ENCODE measurements at regions of chr14 and their contacts with region 1.

Region 1: GRCh38 chr14:73209953-73210352 is 27.4 kb upstream of the PAPLN start:
- DNase-seq: peak; percentile 83
- H3K4me3 ChIP-seq: no peak overlapping the region
- H3K27ac ChIP-seq: peak overlapping the region; percentile 80
- H3K4me1 ChIP-seq: peaks cover 25% of the 10 kb centered on the region
- H3K27me3 ChIP-seq: no peaks in the 10 kb centered on the region
- CTCF ChIP-seq: no peak
- POLR2A ChIP-seq: no peak

Region 2: GRCh38 chr14:73125169-73125588 is 84.8 kb before region 1 on chr14:
- CTCF ChIA-PET with region 1: no interaction called
- POLR2A ChIA-PET with region 1: no interaction called
- dilution Hi-C with region 1: no loop called
- intact Hi-C with region 1: no loop called
- DNase-seq: no peak
- H3K4me3 ChIP-seq: no peak overlapping the region
- H3K27ac ChIP-seq: no peak overlapping the region
- H3K4me1 ChIP-seq: no peaks in the 10 kb centered on the region
- H3K27me3 ChIP-seq: no peaks in the 10 kb centered on the region
- CTCF ChIP-seq: no peak
- POLR2A ChIP-seq: no peak

Region 3: GRCh38 chr14:73227812-73228781 is 18.1 kb after region 1 on chr14:
- CTCF ChIA-PET with region 1: interaction called, 8 read pairs
- POLR2A ChIA-PET with region 1: interaction called, 5 read pairs
- dilution Hi-C with region 1: no loop called
- intact Hi-C with region 1: loop called (anchors 2 kb)
- DNase-seq: peak; percentile 96
- H3K4me3 ChIP-seq: peak overlapping the region in 1 of 3 experiments; percentile 11
- H3K27ac ChIP-seq: peak overlapping the region; percentile 78
- H3K4me1 ChIP-seq: peaks cover 36% of the 10 kb centered on the region
- H3K27me3 ChIP-seq: no peaks in the 10 kb centered on the region
- CTCF ChIP-seq: no peak
- POLR2A ChIP-seq: no peak

Region 4: GRCh38 chr14:73283608-73284379 is 73.8 kb after region 1 on chr14:
- CTCF ChIA-PET with region 1: no interaction called
- POLR2A ChIA-PET with region 1: no interaction called
- dilution Hi-C with region 1: no loop called
- intact Hi-C with region 1: no loop called
- DNase-seq: no peak
- H3K4me3 ChIP-seq: no peak overlapping the region
- H3K27ac ChIP-seq: no peak overlapping the region
- H3K4me1 ChIP-seq: no peaks in the 10 kb centered on the region
- H3K27me3 ChIP-seq: no peaks in the 10 kb centered on the region
- CTCF ChIP-seq: peak in 1 of 2 donors; percentile 25
- POLR2A ChIP-seq: no peak

Region 5: GRCh38 chr14:73491256-73492042 is 281.5 kb after region 1 on chr14:
- CTCF ChIA-PET with region 1: no interaction called
- POLR2A ChIA-PET with region 1: no interaction called
- dilution Hi-C with region 1: no loop called
- intact Hi-C with region 1: loop called (anchors 10 kb)
- DNase-seq: peak; percentile 71
- H3K4me3 ChIP-seq: peak overlapping the region; percentile 37 to 78 (median 65)
- H3K27ac ChIP-seq: peak overlapping the region; percentile 51
- H3K4me1 ChIP-seq: peaks cover 15% of the 10 kb centered on the region
- H3K27me3 ChIP-seq: no peaks in the 10 kb centered on the region
- CTCF ChIP-seq: no peak
- POLR2A ChIP-seq: peak; percentile 9